IMR-90 (cell line): ENCODE measurements at regions of chr5 and their contacts with region 1.

Region 1: DNA sequence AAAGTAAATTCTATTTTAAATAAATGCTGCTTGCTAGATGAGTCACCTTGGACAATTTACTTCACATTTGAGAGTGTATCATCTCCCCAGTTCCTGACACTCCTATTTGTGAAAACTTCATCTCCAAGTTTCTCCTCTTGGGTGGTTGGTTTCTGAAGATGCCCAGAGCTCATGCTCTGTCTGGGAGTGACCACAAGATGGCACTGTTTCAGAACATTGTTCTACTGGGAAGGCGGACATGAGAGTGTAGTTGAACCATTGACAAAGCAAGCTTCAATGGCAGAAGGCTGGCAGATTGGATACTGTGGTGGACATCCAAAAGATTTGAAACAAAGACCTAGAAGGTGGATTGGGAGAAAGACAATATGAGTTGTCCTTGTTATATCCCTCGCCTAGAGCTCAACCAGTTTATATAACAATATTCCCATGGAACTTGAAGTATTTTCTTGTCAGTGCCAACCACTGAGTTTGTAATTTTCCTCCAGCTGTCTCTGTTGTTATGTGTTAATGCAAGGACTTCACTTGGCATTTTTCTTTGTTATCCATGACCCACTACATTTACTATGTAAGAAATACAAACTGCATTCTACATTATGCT is 234.3 kb upstream of the ANKH start:
- DNase-seq: peak; percentile 54
- ATAC-seq: peak; percentile 90
- H3K4me3 ChIP-seq: no peak overlapping the region
- H3K27ac ChIP-seq: no peak overlapping the region
- H3K4me1 ChIP-seq: no peaks in the 10 kb centered on the region
- H3K27me3 ChIP-seq: peaks cover 5% of the 10 kb centered on the region; the same call in 1 of the 2 replicates
- CTCF ChIP-seq: peak; percentile 68
- POLR2A ChIP-seq: no peak
- RAD21 ChIP-seq: peak; percentile 62

Region 2: DNA sequence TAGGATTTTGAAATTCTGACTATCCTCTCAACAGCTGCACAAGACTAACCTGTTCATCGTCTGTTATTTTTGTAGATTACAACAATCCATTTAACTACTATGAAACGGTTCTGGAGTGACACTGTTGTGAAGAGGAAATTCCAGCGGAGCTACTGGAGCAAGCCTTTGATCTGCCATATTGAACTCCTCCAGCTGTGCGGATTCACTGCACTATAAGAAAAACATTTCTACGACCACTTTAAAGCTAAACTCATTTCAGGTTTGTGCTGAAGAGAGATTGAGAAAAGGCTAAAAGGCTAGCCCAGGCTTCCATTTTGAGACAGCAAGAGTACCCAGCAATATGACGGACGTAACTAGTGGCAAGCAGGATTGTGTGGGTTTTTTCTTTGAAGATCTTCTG is 129.4 kb before region 1 on chr5:
- CTCF ChIA-PET with region 1: no interaction called
- POLR2A ChIA-PET with region 1: no interaction called
- dilution Hi-C with region 1: no loop called
- in situ Hi-C with region 1: no loop called
- intact Hi-C with region 1: no loop called
- DNase-seq: no peak
- ATAC-seq: no peak
- H3K4me3 ChIP-seq: no peak overlapping the region
- H3K27ac ChIP-seq: no peak overlapping the region
- H3K4me1 ChIP-seq: no peaks in the 10 kb centered on the region
- H3K27me3 ChIP-seq: peaks cover 32% of the 10 kb centered on the region
- CTCF ChIP-seq: no peak
- POLR2A ChIP-seq: no peak
- RAD21 ChIP-seq: no peak

Region 3: DNA sequence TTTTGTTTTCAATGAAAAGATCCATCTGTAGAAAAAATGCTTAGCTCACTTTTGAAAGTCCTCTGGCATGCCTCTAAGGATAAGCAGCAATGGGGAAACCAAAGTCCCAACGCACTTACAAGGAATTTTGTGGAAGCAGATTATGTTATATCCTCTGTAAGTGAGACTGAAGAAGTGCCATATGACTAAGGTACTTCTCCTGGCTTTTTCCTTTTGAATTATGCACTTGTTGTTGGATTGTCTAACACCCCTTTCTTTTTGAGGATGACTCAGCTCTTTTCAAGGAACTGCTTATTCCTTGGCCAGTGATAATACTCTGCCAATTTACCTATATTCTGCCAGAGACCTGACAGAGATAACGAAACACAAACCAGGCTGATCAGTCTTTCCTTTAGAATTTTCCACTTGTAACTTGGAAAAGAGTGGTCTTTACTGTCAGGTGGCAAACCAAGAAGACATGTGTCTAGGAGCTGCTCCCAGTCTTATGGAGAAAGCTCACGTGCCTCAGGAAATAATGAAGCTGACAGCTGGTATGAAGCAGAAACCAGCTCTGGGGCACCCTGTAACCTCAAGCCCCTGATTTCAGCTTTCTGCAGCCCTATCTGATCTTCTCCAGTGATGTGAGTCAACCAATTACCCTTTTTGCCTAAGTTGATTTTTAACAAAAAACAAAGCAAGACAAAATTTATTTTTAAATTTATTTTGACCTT is 103.3 kb after region 1 on chr5:
- CTCF ChIA-PET with region 1: no interaction called
- POLR2A ChIA-PET with region 1: no interaction called
- dilution Hi-C with region 1: no loop called
- in situ Hi-C with region 1: no loop called
- intact Hi-C with region 1: no loop called
- DNase-seq: no peak
- ATAC-seq: peak; percentile 32; the same call in 1 of the 2 replicates
- H3K4me3 ChIP-seq: no peak overlapping the region
- H3K27ac ChIP-seq: no peak overlapping the region
- H3K4me1 ChIP-seq: peaks cover 2% of the 10 kb centered on the region
- H3K27me3 ChIP-seq: peaks cover 2% of the 10 kb centered on the region; the same call in 1 of the 2 replicates
- CTCF ChIP-seq: no peak
- POLR2A ChIP-seq: no peak
- RAD21 ChIP-seq: no peak

Region 4: GRCh38 chr5:15285901-15286583 is 180.1 kb after region 1 on chr5:
- CTCF ChIA-PET with region 1: no interaction called
- POLR2A ChIA-PET with region 1: no interaction called
- dilution Hi-C with region 1: no loop called
- in situ Hi-C with region 1: loop called (anchors 10 kb)
- intact Hi-C with region 1: no loop called
- DNase-seq: peak; percentile 85
- ATAC-seq: peak; percentile 93
- H3K4me3 ChIP-seq: peak overlapping the region; percentile 4; the same call in 1 of the 2 replicates
- H3K27ac ChIP-seq: no peak overlapping the region; the same call in 1 of the 2 replicates
- H3K4me1 ChIP-seq: no peaks in the 10 kb centered on the region; the same call in 1 of the 2 replicates
- H3K27me3 ChIP-seq: no peaks in the 10 kb centered on the region
- CTCF ChIP-seq: no peak
- POLR2A ChIP-seq: no peak
- RAD21 ChIP-seq: no peak